ENCODE measurements at regions of chr1 and their contacts with region 1.

Region 1: GRCh38 chr1:40404670-40405462 is 31.3 kb downstream of the SMAP2 start:
- DNase-seq: no peak
- H3K4me3 ChIP-seq: no peak overlapping the region
- H3K27ac ChIP-seq: no peak overlapping the region
- H3K4me1 ChIP-seq: peaks cover 0 to 19% (median 2%) of the 10 kb centered on the region in 4 donors
- H3K27me3 ChIP-seq: no peaks in the 10 kb centered on the region
- CTCF ChIP-seq: peak; percentile 83 to 89

Region 2: GRCh38 chr1:40153073-40153770 is 251.6 kb before region 1 on chr1:
- intact Hi-C with region 1: loop called (anchors 5 kb)
- DNase-seq: no peak
- H3K4me3 ChIP-seq: no peak overlapping the region
- H3K27ac ChIP-seq: no peak overlapping the region
- H3K4me1 ChIP-seq: no peaks in the 10 kb centered on the region
- H3K27me3 ChIP-seq: peaks cover 0 to 4% of the 10 kb centered on the region in 2 donors
- CTCF ChIP-seq: peak; percentile 68 to 73

Region 3: GRCh38 chr1:40344597-40344996 is 60.3 kb before region 1 on chr1:
- intact Hi-C with region 1: loop called (anchors 10 kb)
- DNase-seq: peak; percentile 74 to 75
- H3K4me3 ChIP-seq: no peak overlapping the region
- H3K27ac ChIP-seq: no peak overlapping the region
- H3K4me1 ChIP-seq: peaks cover 0 to 5% (median 0%) of the 10 kb centered on the region in 4 donors
- H3K27me3 ChIP-seq: no peaks in the 10 kb centered on the region
- CTCF ChIP-seq: no peak